Activated T-helper 1 cell treated with anti-CD3 and anti-CD28 coated beads, Interleukin-12 subunit alpha, Interleukin-12 subunit beta, Interleukin-2, Interleukin-4 antibody, amounts not matched to agents 30 ng/mL and 10 ng/mL and 1 ng/mL, durations not matched to agents 14 hours and 24 hours and 36 hours (primary cell): ENCODE measurements at regions of chr17 and their contacts with region 1.

Region 1: GRCh38 chr17:76737082-76737675 is at the start of gene SRSF2:
- DNase-seq: peak; percentile 100
- H3K4me3 Mint-ChIP-seq: peak within 1 kb of the TSS; percentile 100
- H3K27ac Mint-ChIP-seq: peak within 1 kb of the TSS; percentile 99
- H3K4me1 Mint-ChIP-seq: peaks cover 49% of the 10 kb centered on the region
- H3K27me3 Mint-ChIP-seq: no peaks in the 10 kb centered on the region
- total RNA-seq, gene SRSF2: 535 and 541 TPM in 2 replicates

Region 2: GRCh38 chr17:75784473-75785015 is 952.6 kb before region 1 on chr17 and contains the start of gene UNK:
- intact Hi-C with region 1: loop called (anchors 5 kb)
- DNase-seq: peak; percentile 94
- H3K4me3 Mint-ChIP-seq: peak within 1 kb of the TSS; percentile 92
- H3K27ac Mint-ChIP-seq: peak within 1 kb of the TSS; percentile 99
- H3K4me1 Mint-ChIP-seq: peaks cover 47% of the 10 kb centered on the region
- H3K27me3 Mint-ChIP-seq: peaks cover 2% of the 10 kb centered on the region
- total RNA-seq, gene UNK: 26.0 and 26.9 TPM in 2 replicates

Region 3: GRCh38 chr17:76452660-76453430 is 284.3 kb before region 1 on chr17 and contains the start of gene UBE2O:
- intact Hi-C with region 1: loop called (anchors 5 kb)
- DNase-seq: peak; percentile 93
- H3K4me3 Mint-ChIP-seq: peak within 1 kb of the TSS; percentile 91
- H3K27ac Mint-ChIP-seq: peak within 1 kb of the TSS; percentile 87
- H3K4me1 Mint-ChIP-seq: peaks cover 42% of the 10 kb centered on the region
- H3K27me3 Mint-ChIP-seq: peaks cover 10% of the 10 kb centered on the region
- total RNA-seq, gene UBE2O: 44.9 and 45.1 TPM in 2 replicates

Region 4: GRCh38 chr17:76612977-76613851 is 124.0 kb before region 1 on chr17:
- intact Hi-C with region 1: no loop called
- DNase-seq: no peak
- H3K4me3 Mint-ChIP-seq: no peak overlapping the region
- H3K27ac Mint-ChIP-seq: no peak overlapping the region
- H3K4me1 Mint-ChIP-seq: no peaks in the 10 kb centered on the region
- H3K27me3 Mint-ChIP-seq: peaks cover 7% of the 10 kb centered on the region

Region 5: GRCh38 chr17:76671123-76671911 is 65.9 kb before region 1 on chr17:
- intact Hi-C with region 1: loop called (anchors 1 kb)
- DNase-seq: peak; percentile 99
- H3K4me3 Mint-ChIP-seq: peak overlapping the region; percentile 93
- H3K27ac Mint-ChIP-seq: peak overlapping the region; percentile 90
- H3K4me1 Mint-ChIP-seq: peaks cover 30% of the 10 kb centered on the region
- H3K27me3 Mint-ChIP-seq: peaks cover 10% of the 10 kb centered on the region

Region 6: GRCh38 chr17:76753061-76753961 is 16.1 kb after region 1 on chr17:
- intact Hi-C with region 1: loop called (anchors 1 kb)
- DNase-seq: no peak
- H3K4me3 Mint-ChIP-seq: peak overlapping the region; percentile 84
- H3K27ac Mint-ChIP-seq: peak overlapping the region; percentile 90
- H3K4me1 Mint-ChIP-seq: peaks cover 26% of the 10 kb centered on the region
- H3K27me3 Mint-ChIP-seq: no peaks in the 10 kb centered on the region

Region 7: GRCh38 chr17:76940738-76941350 is 203.7 kb after region 1 on chr17:
- intact Hi-C with region 1: no loop called
- DNase-seq: no peak
- H3K4me3 Mint-ChIP-seq: no peak overlapping the region
- H3K27ac Mint-ChIP-seq: no peak overlapping the region
- H3K4me1 Mint-ChIP-seq: no peaks in the 10 kb centered on the region
- H3K27me3 Mint-ChIP-seq: peaks cover 2% of the 10 kb centered on the region

Region 8: DNA sequence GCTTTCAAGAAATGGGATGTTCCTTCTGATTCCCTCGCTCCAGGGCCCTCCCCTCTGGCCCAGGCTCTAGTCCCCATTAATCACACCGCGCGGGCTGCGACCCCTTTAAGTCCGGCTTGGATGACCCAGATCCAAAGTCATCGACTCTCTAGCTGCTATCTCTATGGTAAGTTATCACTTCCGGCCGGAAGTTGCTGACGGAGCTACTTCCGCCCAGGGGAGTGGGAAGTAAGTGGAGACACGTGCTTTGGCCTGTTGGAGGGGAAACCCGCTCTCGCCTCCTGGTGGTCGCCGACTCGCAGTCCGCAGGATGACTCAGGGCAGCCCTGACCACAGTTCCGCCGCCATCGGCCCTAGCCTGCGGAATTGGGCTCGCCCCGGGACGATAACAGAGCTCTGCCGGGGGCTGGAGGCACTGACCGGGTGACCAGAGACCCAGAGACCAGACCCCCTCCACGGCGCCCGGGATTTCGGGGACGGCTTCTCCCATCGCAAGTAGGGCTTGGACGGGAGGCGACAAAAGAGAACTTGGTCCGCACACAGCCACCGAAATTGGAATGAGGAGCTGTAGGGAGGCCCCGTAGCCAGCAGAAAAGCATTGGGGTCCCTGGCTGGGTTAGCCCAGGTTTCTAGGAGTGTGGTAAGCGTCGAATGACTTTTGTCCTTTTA is 351.4 kb after region 1 on chr17:
- intact Hi-C with region 1: loop called (anchors 2 kb)
- DNase-seq: peak; percentile 84
- H3K4me3 Mint-ChIP-seq: peak overlapping the region; percentile 91
- H3K27ac Mint-ChIP-seq: peak overlapping the region; percentile 94
- H3K4me1 Mint-ChIP-seq: peaks cover 39% of the 10 kb centered on the region
- H3K27me3 Mint-ChIP-seq: peaks cover 3% of the 10 kb centered on the region